Ascending aorta (tissue), 2 donors: ENCODE measurements at regions of chr18 and their contacts with region 1.

Region 1: DNA sequence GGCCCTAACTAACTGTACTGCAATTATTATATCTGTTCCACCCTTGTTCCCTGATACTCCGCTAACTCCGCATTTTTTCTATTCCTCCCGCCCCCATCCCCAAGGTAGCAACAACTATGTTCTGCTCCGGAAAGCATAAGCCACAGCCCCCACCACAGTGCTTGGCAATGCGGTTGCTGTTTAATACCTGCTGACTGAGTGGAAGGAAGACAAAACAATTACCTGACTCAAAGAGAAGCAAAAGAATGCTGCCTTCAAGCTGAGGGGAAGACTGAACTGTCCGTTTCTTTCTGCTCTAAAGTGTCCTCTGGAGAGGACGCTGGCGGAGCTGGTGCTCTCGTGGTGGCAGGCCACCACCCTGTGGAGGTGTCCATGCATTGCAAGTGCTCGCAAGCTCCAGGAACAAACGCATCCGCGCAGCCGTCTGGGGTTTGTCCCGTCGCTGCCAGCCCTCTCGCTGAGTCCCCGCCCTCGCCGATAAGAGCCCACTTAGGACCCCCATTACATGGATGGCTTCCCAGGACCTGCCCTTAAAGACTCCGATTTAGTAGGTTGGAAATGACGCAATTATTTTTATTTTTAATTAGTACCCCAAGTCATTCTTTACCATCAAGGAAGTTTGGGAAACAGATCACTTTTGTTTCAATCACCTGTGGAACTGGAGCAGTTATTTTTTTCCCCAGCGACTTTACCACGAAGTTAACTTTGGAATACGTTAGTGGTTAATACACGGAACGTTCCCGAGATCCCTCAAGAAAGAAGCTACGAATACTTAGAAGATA is 1.6 kb upstream of the MYL12A start:
- DNase-seq: peak; percentile 54 to 93
- H3K4me3 ChIP-seq: peak overlapping the region; percentile 81 to 92
- H3K27ac ChIP-seq: peak overlapping the region; percentile 100
- H3K4me1 ChIP-seq: peaks cover 2 to 5% of the 10 kb centered on the region in 2 donors
- H3K27me3 ChIP-seq: no peaks in the 10 kb centered on the region
- CTCF ChIP-seq: peak; percentile 93 to 98 (median 98)

Region 2: GRCh38 chr18:2655178-2655953 is 590.7 kb before region 1 on chr18 and contains the start of gene SMCHD1:
- intact Hi-C with region 1: loop called (anchors 1 kb)
- DNase-seq: peak; percentile 66 to 93
- H3K4me3 ChIP-seq: peak within 1 kb of the TSS; percentile 83 to 95
- H3K27ac ChIP-seq: peak within 1 kb of the TSS; percentile 97 to 98
- H3K4me1 ChIP-seq: peaks cover 3 to 27% of the 10 kb centered on the region in 2 donors
- H3K27me3 ChIP-seq: no peaks in the 10 kb centered on the region
- CTCF ChIP-seq: no peak
- total RNA-seq, gene SMCHD1: 29.2 TPM

Region 3: GRCh38 chr18:2932247-2933181 is 313.5 kb before region 1 on chr18:
- intact Hi-C with region 1: loop called (anchors 1 kb)
- DNase-seq: no peak
- H3K4me3 ChIP-seq: no peak overlapping the region
- H3K27ac ChIP-seq: no peak overlapping the region
- H3K4me1 ChIP-seq: peaks cover 0 to 11% of the 10 kb centered on the region in 2 donors
- H3K27me3 ChIP-seq: no peaks in the 10 kb centered on the region
- CTCF ChIP-seq: peak; percentile 66 to 72 (median 70)

Region 4: DNA sequence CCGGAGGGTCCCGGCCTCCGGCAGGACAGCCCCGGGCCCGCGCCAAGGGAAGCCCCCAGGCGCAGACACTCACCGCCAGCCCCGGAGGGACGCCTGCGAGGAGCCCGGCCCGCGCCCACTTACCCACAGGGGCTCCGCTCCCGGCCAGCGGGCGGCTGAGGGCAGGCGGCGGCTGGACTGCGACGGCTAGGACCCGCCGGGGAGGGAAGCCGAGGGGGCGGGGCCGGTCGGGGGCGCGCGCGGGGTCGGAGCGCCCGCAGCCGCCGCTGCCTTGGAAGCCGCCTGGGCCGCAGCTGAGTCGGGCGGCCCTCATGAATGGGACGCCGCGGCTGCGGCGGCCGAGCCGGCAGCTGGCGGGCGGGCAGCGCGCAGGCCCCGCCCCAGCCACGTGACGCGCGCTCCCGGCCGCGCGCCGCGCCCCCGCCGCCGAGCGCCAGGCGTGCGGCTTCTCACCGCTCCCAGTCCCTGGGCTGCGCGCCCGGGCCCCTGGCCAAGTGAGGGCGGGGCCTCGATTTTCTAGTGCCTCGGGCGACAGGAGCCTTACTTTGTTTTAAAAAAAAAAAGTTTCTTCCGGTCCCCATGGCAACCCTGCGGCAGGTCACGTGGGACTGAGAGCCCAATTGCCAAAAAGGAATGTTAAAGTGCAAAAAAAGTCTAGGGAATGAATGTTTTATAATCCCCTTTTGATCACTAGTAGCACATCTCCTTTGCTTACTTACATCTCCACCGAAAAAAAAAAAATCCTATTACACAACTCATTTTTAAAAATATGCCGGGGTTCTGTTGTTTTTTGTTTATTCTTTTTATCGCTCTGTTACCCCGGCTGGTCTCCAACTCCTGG is 232.9 kb before region 1 on chr18 and contains the start of gene LPIN2:
- intact Hi-C with region 1: loop called (anchors 1 kb)
- DNase-seq: peak; percentile 97 to 100
- H3K4me3 ChIP-seq: peak within 1 kb of the TSS; percentile 98 to 99
- H3K27ac ChIP-seq: peak within 1 kb of the TSS; percentile 92 to 100
- H3K4me1 ChIP-seq: peaks cover 4 to 37% of the 10 kb centered on the region in 2 donors
- H3K27me3 ChIP-seq: no peaks in the 10 kb centered on the region
- CTCF ChIP-seq: no peak
- total RNA-seq, gene LPIN2: 11.6 TPM

Region 5: DNA sequence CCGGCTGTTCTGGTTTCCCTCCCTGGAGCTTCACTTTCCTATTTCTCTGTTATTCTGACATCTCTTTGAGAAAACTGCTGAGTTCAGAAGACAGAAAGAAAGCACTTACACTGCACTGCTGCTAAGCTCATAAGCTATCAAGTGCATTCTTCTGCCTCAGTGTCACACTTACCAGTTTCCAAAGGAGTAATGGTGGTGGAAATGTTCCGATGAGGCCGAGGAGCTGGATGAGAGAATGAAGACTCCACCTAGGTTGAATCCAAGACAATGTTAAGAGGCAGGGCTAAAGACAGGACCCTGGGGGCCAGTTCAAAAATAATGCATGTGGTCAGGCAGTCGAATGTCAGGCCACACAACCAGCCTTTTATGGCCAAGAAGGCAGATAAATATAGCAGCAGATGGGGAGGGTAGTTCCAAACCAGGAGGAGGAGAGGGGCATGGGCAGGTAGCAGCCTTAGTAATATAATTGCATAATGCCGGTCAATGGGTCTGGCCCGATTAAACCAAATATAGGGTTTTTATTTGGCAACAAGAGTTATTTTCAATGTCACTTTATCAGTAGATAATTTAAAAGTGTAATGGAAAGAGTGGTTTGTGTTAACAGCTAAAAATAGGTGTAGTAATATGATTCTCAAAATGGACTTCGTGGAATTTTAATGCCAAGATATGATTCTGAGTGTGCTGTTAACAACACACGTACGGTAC is 26.3 kb before region 1 on chr18 and contains the start of gene MYOM1:
- intact Hi-C with region 1: loop called (anchors 2 kb)
- DNase-seq: no peak
- H3K4me3 ChIP-seq: peak within 1 kb of the TSS; percentile 38 to 68
- H3K27ac ChIP-seq: peak within 1 kb of the TSS; percentile 47 to 84
- H3K4me1 ChIP-seq: peaks cover 0 to 3% of the 10 kb centered on the region in 2 donors
- H3K27me3 ChIP-seq: no peaks in the 10 kb centered on the region
- CTCF ChIP-seq: no peak
- total RNA-seq, gene MYOM1: 7.8 TPM